Gastrocnemius medialis (tissue), 4 donors: ENCODE measurements at regions of chr7 and their contacts with region 1.

Region 1: DNA sequence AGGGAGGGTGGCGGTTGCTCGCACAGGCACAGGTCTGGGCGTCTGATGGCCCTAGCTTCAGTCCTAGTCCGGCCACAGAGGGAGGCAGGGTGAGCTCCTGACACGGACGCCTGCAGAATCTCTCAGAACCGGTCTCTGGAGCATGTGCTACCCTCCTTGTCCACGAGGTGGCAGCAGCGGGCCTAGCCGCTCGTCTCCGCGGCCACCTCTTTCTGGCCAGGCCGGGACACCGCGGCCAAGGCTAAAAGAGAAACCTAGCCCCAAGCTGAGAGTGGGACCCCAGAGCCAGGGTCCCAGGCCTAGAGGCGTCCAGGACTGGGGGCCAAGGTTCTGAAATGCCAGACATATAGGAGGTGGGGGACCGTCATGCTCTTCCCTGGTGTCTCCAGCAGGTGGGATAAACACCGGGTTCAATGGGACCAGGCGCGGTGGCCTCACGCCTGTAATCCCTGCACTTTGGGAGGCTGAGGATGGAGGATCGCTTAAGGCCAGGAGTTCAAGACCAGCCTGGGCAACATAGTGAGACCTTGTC is 3.2 kb upstream of the LAT2 start:
- DNase-seq: peak; percentile 61 to 78
- ATAC-seq: peak; percentile 72 to 89
- H3K4me3 ChIP-seq: peak overlapping the region; percentile 17 to 44 (median 36)
- H3K27ac ChIP-seq: no peak overlapping the region
- H3K4me1 ChIP-seq: no peaks in the 10 kb centered on the region
- H3K27me3 ChIP-seq: no peaks in the 10 kb centered on the region
- CTCF ChIP-seq: peak; percentile 94 to 100 (median 96)
- POLR2A ChIP-seq: no peak

Region 2: GRCh38 chr7:74254129-74254857 is 47.6 kb after region 1 on chr7 and contains the start of gene RFC2:
- in situ Hi-C with region 1: no loop called
- intact Hi-C with region 1: loop called (anchors 5 kb)
- DNase-seq: peak; percentile 91 to 95
- ATAC-seq: peak; percentile 97
- H3K4me3 ChIP-seq: peak within 1 kb of the TSS; percentile 72 to 90 (median 84)
- H3K27ac ChIP-seq: peak within 1 kb of the TSS; percentile 84 to 91 (median 86)
- H3K4me1 ChIP-seq: peaks cover 12 to 18% of the 10 kb centered on the region in 2 donors
- H3K27me3 ChIP-seq: no peaks in the 10 kb centered on the region
- CTCF ChIP-seq: peak; percentile 42 to 71 (median 46)
- POLR2A ChIP-seq: peak; percentile 61 to 64
- total RNA-seq, gene RFC2: 8.2 to 15.2 (median 12.7) TPM

Region 3: DNA sequence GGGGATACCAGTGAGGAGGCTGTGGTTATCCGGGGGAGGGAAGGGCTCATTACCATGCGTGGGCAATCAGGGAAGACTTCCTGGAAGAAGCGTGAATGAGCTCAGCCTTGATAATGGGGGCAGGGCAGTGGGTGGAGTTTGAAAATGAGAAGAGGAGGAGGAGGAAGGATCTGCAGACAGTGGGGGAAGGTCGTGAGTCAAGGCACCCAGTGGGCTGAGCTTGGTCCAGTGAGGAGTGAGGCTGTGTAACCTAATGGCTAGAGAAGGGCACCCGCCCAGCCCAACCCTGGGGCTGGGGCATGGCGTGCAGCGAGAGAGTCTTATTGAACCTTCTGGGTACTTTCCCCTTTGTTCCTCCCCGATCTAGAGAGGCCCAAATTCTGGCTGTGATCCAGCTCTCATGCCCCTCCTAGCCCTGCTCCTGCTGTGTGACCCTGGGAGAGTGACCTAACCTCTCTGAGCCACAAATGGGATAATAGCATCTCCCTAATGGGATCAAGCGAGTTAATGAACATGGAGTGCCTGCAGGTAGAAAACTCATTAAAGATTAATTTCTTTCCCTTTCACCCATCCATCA is 114.1 kb after region 1 on chr7:
- in situ Hi-C with region 1: no loop called
- intact Hi-C with region 1: no loop called
- DNase-seq: no peak
- ATAC-seq: no peak
- H3K4me3 ChIP-seq: no peak overlapping the region
- H3K27ac ChIP-seq: no peak overlapping the region
- H3K4me1 ChIP-seq: no peaks in the 10 kb centered on the region
- H3K27me3 ChIP-seq: no peaks in the 10 kb centered on the region
- CTCF ChIP-seq: no peak
- POLR2A ChIP-seq: no peak